CD4-positive, alpha-beta T cell (primary cell): ENCODE measurements at regions of chr13 and their contacts with region 1.

Region 1: DNA sequence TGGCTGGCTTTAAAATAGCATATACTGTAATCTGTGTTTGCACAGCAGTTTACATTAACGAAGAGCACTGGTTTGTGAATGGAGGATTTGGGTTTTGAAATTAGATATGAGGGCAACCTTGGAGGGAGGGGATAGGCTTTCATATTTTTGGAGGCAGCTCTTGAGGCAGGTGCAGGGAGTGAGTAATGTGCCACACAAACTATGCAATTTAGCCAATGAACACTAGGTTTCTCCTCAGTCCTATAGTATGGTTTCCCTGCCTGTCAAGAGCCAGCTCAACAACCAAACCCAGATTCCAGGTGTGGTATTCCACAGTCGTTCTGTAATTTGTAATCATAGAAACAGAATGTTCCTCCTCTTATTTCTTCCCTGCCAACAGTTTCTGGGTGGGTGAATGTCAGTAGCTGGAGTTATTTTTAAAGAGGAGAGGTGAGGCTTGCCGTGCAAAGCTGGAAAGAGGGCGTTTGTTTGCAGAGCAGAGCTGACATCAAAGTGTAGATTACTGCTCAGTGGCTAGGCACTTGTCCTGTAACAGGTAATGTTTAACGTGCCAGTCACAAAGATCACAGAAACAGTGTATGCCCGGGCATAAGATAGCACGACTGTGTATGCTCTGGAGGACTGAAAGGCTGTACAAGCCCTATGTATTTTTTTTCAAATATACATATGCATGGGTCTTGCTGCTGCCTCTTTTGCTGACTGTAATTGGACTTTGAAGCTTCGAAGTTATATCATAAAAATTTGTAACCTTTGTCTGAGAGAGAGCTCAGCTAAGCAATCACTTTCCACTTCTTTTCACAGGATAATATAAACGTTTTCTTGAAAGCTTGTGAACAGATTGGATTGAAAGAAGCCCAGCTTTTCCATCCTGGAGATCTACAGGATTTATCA is 124.2 kb downstream of the LMO7 start:
- DNase-seq: peak in 6 of 14 experiments; percentile 7 to 56 (median 44)
- ATAC-seq: peak; percentile 73
- H3K4me3 ChIP-seq: peak overlapping the region; percentile 38
- H3K4me3 Mint-ChIP-seq: peak overlapping the region; percentile 91
- H3K27ac ChIP-seq: peak overlapping the region in 1 of 2 donors; percentile 8
- H3K27ac Mint-ChIP-seq: peak overlapping the region; percentile 91
- H3K4me1 ChIP-seq: peaks cover 19% of the 10 kb centered on the region
- H3K4me1 Mint-ChIP-seq: peaks cover 70% of the 10 kb centered on the region
- H3K27me3 ChIP-seq: no peaks in the 10 kb centered on the region
- H3K27me3 Mint-ChIP-seq: no peaks in the 10 kb centered on the region
- CTCF ChIP-seq: peak; percentile 37

Region 2: DNA sequence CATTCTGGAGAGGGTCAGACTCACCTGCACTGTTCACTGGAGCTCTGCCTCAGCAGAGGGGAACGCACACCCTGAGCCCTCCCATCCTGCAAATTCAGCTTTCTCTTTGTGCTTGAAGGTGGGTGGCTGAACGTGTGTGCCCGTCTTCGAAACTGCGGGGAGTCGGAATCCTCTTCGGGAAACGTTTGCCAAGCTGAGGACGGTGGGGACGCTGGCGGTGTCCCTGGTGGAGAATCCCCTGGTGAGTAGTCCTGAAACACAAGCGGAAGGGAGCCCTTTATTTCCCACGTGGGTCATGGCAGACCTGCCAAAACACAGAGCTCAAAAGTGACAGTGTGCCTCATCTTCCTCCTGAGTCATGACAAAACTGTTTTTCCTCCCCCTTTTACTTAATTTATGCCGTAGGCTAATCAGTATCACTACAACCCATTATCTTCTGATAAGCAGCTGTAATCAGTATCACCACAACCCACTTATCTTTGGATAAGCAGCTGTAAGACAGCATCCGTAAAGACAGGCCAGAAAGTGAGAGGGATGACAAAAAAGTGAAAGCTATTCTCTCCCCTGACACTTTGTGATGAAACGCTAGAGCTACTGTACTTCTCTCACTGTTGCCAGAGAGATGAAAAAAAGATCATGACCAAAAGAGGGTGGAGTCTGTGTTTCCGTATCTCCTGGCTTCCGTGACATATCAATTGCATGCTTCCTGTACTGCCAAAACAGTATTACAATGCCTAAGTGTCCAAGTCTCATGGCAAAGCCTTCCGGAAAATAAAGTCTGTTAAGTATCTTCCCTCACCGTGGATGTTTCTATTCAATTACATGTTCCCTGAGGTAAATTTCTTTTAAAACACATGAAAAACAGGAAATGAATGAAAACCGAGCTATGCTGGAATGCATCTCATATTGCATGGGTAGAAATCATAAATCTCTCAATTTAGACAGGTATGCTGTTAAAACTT is 433.9 kb before region 1 on chr13:
- CTCF ChIA-PET with region 1: no interaction called
- POLR2A ChIA-PET with region 1: interaction called, 10 read pairs
- intact Hi-C with region 1: no loop called
- DNase-seq: peak; percentile 12 to 92 (median 40)
- ATAC-seq: peak; percentile 86
- H3K4me3 ChIP-seq: peak overlapping the region; percentile 75
- H3K4me3 Mint-ChIP-seq: peak overlapping the region; percentile 92
- H3K27ac ChIP-seq: peak overlapping the region; percentile 89 to 93
- H3K27ac Mint-ChIP-seq: peak overlapping the region; percentile 93
- H3K4me1 ChIP-seq: peaks cover 5% of the 10 kb centered on the region
- H3K4me1 Mint-ChIP-seq: peaks cover 57% of the 10 kb centered on the region
- H3K27me3 ChIP-seq: no peaks in the 10 kb centered on the region
- H3K27me3 Mint-ChIP-seq: no peaks in the 10 kb centered on the region
- CTCF ChIP-seq: no peak

Region 3: DNA sequence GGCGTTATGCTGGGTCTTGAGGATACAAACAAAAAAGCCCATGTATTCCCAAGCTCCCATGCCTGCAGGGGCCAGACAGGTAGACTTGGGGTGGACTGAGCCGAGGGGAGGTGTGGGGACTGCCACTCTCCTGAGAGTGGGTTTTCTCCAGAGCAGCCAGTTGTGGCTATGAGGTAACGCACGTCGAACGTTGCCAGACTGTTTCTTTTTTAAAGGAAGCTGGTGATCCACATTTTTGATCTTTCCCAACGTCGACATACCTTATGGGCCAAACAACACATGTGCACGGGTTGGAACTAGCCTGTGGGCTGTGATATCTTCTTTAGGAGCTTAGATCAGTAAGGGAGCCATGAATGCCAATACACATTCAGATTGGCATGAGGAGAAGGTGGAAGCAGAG is 63.6 kb before region 1 on chr13:
- CTCF ChIA-PET with region 1: interaction called, 5 read pairs
- POLR2A ChIA-PET with region 1: interaction called, 19 read pairs
- intact Hi-C with region 1: loop called in 1 of 2 experiments (anchors 5 kb)
- DNase-seq: no peak
- ATAC-seq: no peak
- H3K4me3 ChIP-seq: no peak overlapping the region
- H3K4me3 Mint-ChIP-seq: no peak overlapping the region
- H3K27ac ChIP-seq: no peak overlapping the region
- H3K27ac Mint-ChIP-seq: no peak overlapping the region
- H3K4me1 ChIP-seq: no peaks in the 10 kb centered on the region
- H3K4me1 Mint-ChIP-seq: no peaks in the 10 kb centered on the region
- H3K27me3 ChIP-seq: no peaks in the 10 kb centered on the region
- H3K27me3 Mint-ChIP-seq: no peaks in the 10 kb centered on the region
- CTCF ChIP-seq: no peak

Region 4: DNA sequence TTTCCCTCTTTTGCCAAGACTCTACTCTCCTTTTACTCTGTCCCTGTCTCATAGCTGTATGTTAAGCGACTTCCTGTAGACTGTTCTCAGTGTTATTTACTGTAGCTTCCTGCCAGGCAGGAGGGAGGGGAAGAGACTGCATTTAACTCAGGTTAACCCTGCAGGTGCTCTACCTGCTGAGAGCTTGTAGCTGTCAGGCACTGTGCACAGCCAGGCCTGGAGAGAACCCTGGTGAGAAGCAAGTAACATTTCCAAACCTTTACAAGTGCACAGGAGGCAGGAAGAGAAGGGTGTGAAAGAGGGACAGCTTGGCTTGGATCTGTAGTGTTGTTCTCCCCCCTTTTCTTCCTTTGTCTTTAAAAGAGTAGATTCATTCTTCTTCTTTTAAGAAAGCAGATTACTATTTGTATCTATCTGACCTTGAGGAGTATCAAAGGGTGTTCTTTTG is 42.8 kb after region 1 on chr13:
- CTCF ChIA-PET with region 1: interaction called, 3 read pairs
- POLR2A ChIA-PET with region 1: interaction called, 76 read pairs
- intact Hi-C with region 1: loop called (anchors 1 to 5 kb)
- DNase-seq: peak in 12 of 14 experiments; percentile 1 to 57 (median 29)
- ATAC-seq: peak; percentile 99
- H3K4me3 ChIP-seq: no peak overlapping the region
- H3K4me3 Mint-ChIP-seq: peak overlapping the region; percentile 31
- H3K27ac ChIP-seq: peak overlapping the region; percentile 5 to 35
- H3K27ac Mint-ChIP-seq: peak overlapping the region; percentile 82
- H3K4me1 ChIP-seq: peaks cover 9% of the 10 kb centered on the region
- H3K4me1 Mint-ChIP-seq: peaks cover 49% of the 10 kb centered on the region
- H3K27me3 ChIP-seq: no peaks in the 10 kb centered on the region
- H3K27me3 Mint-ChIP-seq: no peaks in the 10 kb centered on the region
- CTCF ChIP-seq: no peak

Region 5: GRCh38 chr13:75870397-75870903 is 110.1 kb after region 1 on chr13:
- CTCF ChIA-PET with region 1: no interaction called
- POLR2A ChIA-PET with region 1: interaction called, 21 read pairs
- intact Hi-C with region 1: no loop called
- DNase-seq: peak in 7 of 14 experiments; percentile 2 to 63 (median 39)
- ATAC-seq: peak; percentile 64
- H3K4me3 ChIP-seq: peak overlapping the region; percentile 44
- H3K4me3 Mint-ChIP-seq: peak overlapping the region; percentile 79
- H3K27ac ChIP-seq: peak overlapping the region; percentile 34 to 50
- H3K27ac Mint-ChIP-seq: peak overlapping the region; percentile 80
- H3K4me1 ChIP-seq: peaks cover 7% of the 10 kb centered on the region
- H3K4me1 Mint-ChIP-seq: peaks cover 17% of the 10 kb centered on the region
- H3K27me3 ChIP-seq: peaks cover 0 to 4% of the 10 kb centered on the region in 2 experiments
- H3K27me3 Mint-ChIP-seq: peaks cover 4% of the 10 kb centered on the region
- CTCF ChIP-seq: peak; percentile 86

Region 6: GRCh38 chr13:76991796-76992547 is 1231.6 kb after region 1 on chr13 and contains the start of gene CLN5:
- CTCF ChIA-PET with region 1: no interaction called
- POLR2A ChIA-PET with region 1: interaction called, 21 read pairs
- intact Hi-C with region 1: no loop called
- DNase-seq: peak; percentile 89 to 99 (median 95)
- ATAC-seq: peak; percentile 85
- H3K4me3 ChIP-seq: peak within 1 kb of the TSS; percentile 72
- H3K4me3 Mint-ChIP-seq: peak within 1 kb of the TSS; percentile 97
- H3K27ac ChIP-seq: peak within 1 kb of the TSS; percentile 89 to 95
- H3K27ac Mint-ChIP-seq: peak within 1 kb of the TSS; percentile 99
- H3K4me1 ChIP-seq: peaks cover 30% of the 10 kb centered on the region
- H3K4me1 Mint-ChIP-seq: peaks cover 60% of the 10 kb centered on the region
- H3K27me3 ChIP-seq: no peaks in the 10 kb centered on the region
- H3K27me3 Mint-ChIP-seq: no peaks in the 10 kb centered on the region
- CTCF ChIP-seq: no peak
- total RNA-seq, gene CLN5: 37.4 to 42.9 TPM

Region 7: DNA sequence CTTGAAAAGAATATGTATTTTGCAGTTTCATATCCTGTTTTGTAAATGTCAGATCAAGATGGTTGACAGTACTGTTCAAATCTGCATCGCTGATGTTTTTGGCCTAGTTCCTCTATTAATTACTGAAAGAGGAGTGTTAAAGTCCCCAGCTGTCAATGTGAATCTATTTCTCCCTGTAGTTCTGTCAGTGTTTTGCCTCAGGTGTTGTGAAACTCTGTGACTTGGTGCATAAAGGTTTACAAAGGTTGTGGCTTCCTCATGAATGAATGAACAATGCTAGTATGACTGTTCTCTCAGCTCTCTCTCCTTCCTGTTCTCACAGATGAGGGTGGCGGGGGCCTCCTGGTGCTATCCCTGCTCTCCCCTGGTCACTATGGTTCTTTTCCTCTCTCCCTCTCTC is 1424.1 kb after region 1 on chr13:
- CTCF ChIA-PET with region 1: no interaction called
- POLR2A ChIA-PET with region 1: no interaction called
- intact Hi-C with region 1: no loop called
- DNase-seq: peak in 3 of 14 experiments; percentile 5 to 13 (median 12)
- ATAC-seq: no peak
- H3K4me3 ChIP-seq: no peak overlapping the region
- H3K4me3 Mint-ChIP-seq: no peak overlapping the region
- H3K27ac ChIP-seq: no peak overlapping the region
- H3K27ac Mint-ChIP-seq: peak overlapping the region; percentile 19
- H3K4me1 ChIP-seq: no peaks in the 10 kb centered on the region
- H3K4me1 Mint-ChIP-seq: peaks cover 21% of the 10 kb centered on the region
- H3K27me3 ChIP-seq: no peaks in the 10 kb centered on the region
- H3K27me3 Mint-ChIP-seq: no peaks in the 10 kb centered on the region
- CTCF ChIP-seq: no peak